ENCODE measurements at regions of chr2 and their contacts with region 1.

Region 1: DNA sequence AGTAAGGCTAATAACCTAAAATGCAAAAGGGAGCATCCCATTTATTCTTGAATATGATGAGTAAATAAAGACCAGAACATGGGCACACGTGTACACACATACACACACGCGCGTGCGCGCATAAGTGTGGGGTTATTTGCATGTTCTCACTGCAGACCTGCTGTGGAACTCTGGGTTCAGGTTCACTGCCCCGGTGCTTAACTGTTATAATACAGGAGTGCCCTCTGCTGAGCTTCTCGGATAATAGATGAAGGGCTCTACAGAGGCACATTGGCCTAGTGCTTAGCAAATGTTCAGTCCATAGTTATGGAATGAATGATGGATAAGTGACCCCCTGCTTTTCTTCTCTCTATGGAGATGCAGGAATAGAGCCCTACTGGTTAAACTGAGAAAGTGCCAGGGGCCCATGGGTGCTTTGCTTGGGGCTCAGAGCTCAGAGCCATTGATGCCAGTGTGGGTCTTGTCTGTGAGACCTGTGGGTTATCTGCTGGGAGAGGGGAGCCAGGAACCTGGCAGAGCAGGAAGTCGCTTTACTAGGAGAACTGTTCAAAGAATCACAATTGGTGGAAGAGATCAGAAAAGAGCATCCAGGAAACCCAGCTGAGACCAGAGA is 3.6 kb upstream of the ARL4C start:
- DNase-seq: peak; percentile 47
- H3K4me3 ChIP-seq: no peak overlapping the region
- H3K27ac ChIP-seq: no peak overlapping the region
- H3K4me1 ChIP-seq: peaks cover 31% of the 10 kb centered on the region
- H3K27me3 ChIP-seq: no peaks in the 10 kb centered on the region
- CTCF ChIP-seq: peak; percentile 54 to 73

Region 2: DNA sequence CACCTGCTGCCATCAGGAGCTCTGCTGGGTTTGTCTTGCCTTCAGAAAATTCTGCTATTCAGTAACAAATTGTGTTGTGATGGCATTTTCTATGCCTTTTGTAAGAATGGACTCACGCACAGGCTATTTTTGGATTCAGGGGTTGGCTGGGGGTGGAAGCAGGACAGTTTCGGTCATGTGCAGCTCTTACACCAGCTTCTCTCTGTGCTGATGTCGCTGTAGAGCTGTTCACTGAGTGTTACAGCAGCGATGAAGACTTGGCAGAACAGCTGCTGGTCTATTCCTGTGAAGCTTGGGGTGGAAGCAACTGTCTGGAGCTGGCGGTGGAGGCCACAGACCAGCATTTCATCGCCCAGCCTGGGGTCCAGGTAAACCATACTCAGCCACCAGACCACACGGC is 534.1 kb before region 1 on chr2:
- CTCF ChIA-PET with region 1: no interaction called
- dilution Hi-C with region 1: loop called (anchors 10 kb)
- in situ Hi-C with region 1: no loop called
- intact Hi-C with region 1: no loop called
- DNase-seq: no peak
- H3K4me3 ChIP-seq: no peak overlapping the region
- H3K27ac ChIP-seq: no peak overlapping the region
- H3K4me1 ChIP-seq: no peaks in the 10 kb centered on the region
- H3K27me3 ChIP-seq: no peaks in the 10 kb centered on the region
- CTCF ChIP-seq: no peak

Region 3: DNA sequence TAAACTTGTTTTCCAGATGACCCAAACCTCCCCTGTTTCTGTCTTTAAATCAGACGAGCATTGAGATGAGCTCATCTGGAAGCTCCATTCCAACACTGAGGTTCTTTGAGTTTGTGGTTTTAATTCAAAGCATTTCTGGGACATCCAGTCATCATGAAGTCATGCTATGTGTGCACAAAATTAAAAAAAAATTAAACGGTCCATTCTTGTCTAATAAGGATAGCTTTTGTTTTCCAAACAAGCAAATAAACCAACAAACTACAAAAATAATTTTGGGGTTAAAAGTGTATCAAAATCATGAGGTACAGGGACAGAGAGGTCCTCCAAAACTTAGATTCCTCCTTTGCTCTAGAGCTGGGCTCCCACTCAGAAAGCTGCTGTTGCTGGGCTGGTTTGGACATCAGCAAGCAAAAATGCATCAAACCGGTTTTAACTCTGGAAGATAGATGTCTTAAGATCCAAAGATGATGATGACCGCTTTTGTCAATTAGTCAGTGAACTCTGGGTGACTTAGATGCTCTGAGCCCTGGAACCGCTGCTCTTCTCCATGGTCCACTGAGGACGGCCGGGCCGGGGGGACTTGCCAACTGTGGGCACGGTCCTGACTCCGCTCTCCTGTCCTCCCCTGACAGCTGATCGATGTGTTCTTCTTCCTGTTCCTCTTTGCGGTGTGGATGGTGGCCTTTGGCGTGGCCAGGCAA is 517.9 kb before region 1 on chr2:
- CTCF ChIA-PET with region 1: no interaction called
- dilution Hi-C with region 1: no loop called
- in situ Hi-C with region 1: loop called in 1 of 2 experiments (anchors 10 kb)
- intact Hi-C with region 1: no loop called
- DNase-seq: peak; percentile 95
- H3K4me3 ChIP-seq: no peak overlapping the region
- H3K27ac ChIP-seq: peak overlapping the region; percentile 92
- H3K4me1 ChIP-seq: peaks cover 46% of the 10 kb centered on the region
- H3K27me3 ChIP-seq: no peaks in the 10 kb centered on the region
- CTCF ChIP-seq: no peak

Region 4: GRCh38 chr2:234241656-234242458 is 258.6 kb before region 1 on chr2:
- CTCF ChIA-PET with region 1: no interaction called
- dilution Hi-C with region 1: loop called (anchors 5 kb)
- in situ Hi-C with region 1: no loop called
- intact Hi-C with region 1: no loop called
- DNase-seq: peak; percentile 93
- H3K4me3 ChIP-seq: peak overlapping the region in 2 of 3 experiments; percentile 1 to 27
- H3K27ac ChIP-seq: peak overlapping the region; percentile 95
- H3K4me1 ChIP-seq: peaks cover 52% of the 10 kb centered on the region
- H3K27me3 ChIP-seq: no peaks in the 10 kb centered on the region
- CTCF ChIP-seq: no peak

Region 5: DNA sequence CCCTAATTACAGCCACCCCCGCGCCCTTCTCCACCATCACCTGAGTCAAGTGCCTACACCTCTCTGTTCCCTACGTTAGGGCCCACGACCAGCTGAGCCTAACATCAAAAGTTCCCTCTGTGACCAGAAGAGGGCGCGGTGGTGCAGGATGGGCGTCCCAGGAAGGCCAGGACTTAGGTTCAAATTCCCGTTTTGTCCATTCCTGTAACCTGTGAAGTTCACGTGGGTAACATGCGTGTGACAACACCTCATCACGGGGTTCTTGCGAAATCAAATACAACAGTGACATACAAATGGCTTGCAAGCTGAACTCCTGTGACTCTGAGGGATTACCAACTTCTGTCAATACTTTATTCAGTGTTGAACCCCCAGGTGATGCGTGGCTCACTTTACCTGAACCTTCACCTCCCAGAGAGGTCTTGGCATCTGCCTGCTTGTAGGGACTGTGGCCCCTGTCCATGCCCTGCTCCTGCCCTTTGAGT is 211.5 kb before region 1 on chr2:
- CTCF ChIA-PET with region 1: interaction called, 5 read pairs
- dilution Hi-C with region 1: no loop called
- in situ Hi-C with region 1: no loop called
- intact Hi-C with region 1: loop called (anchors 1 kb)
- DNase-seq: peak; percentile 24
- H3K4me3 ChIP-seq: no peak overlapping the region
- H3K27ac ChIP-seq: no peak overlapping the region
- H3K4me1 ChIP-seq: peaks cover 32% of the 10 kb centered on the region
- H3K27me3 ChIP-seq: no peaks in the 10 kb centered on the region
- CTCF ChIP-seq: peak; percentile 61 to 78

Region 6: DNA sequence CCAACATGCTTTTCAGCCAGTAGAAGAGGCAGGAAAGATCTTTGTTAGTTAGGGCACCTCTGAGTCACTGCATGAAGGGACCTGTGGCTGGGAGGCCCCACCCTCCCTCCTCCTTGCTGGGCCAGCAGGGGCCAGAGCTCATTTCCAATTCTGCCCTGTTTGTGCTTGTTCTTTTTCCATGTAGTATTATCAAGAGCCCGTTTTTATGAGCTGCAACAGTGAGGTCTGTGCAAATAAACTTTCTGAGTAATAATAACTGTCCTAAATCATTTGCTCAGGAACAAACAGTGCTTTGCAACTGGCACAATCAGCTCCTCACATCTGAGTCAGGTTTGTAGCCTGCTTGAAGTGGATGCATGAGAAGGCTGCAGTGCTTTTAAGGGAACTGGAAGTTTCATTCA is 131.6 kb before region 1 on chr2:
- CTCF ChIA-PET with region 1: interaction called, 4 read pairs
- dilution Hi-C with region 1: no loop called
- in situ Hi-C with region 1: no loop called
- intact Hi-C with region 1: loop called (anchors 10 kb)
- DNase-seq: peak; percentile 82
- H3K4me3 ChIP-seq: no peak overlapping the region
- H3K27ac ChIP-seq: peak overlapping the region; percentile 15
- H3K4me1 ChIP-seq: peaks cover 41% of the 10 kb centered on the region
- H3K27me3 ChIP-seq: no peaks in the 10 kb centered on the region
- CTCF ChIP-seq: peak; percentile 2 to 24

Region 7: DNA sequence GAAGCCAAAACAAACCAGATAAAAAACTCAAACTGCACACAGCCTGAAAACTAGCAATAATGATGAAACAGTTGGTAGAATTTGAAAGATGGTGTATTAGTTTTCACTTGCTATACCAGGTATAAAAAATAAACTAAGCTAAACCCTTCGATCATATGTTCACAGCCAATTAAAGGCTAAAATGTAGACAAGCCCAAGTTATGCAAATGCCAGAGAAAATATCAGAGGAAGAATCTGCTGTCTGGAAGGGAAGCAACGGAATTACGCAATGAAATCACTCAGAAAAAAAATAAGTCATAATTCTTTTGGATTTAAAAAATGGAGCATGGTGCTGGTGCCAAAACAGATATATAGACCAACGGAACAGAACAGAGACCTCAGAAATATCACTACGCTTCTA is 111.9 kb before region 1 on chr2:
- CTCF ChIA-PET with region 1: no interaction called
- dilution Hi-C with region 1: no loop called
- in situ Hi-C with region 1: no loop called
- intact Hi-C with region 1: no loop called
- DNase-seq: no peak
- H3K4me3 ChIP-seq: no peak overlapping the region
- H3K27ac ChIP-seq: no peak overlapping the region
- H3K4me1 ChIP-seq: no peaks in the 10 kb centered on the region
- H3K27me3 ChIP-seq: no peaks in the 10 kb centered on the region
- CTCF ChIP-seq: no peak

Region 8: GRCh38 chr2:235116885-235117492 is 616.5 kb after region 1 on chr2:
- CTCF ChIA-PET with region 1: interaction called, 4 read pairs
- dilution Hi-C with region 1: no loop called
- in situ Hi-C with region 1: no loop called
- intact Hi-C with region 1: loop called (anchors 5 kb)
- DNase-seq: peak; percentile 24
- H3K4me3 ChIP-seq: no peak overlapping the region
- H3K27ac ChIP-seq: no peak overlapping the region
- H3K4me1 ChIP-seq: no peaks in the 10 kb centered on the region
- H3K27me3 ChIP-seq: no peaks in the 10 kb centered on the region
- CTCF ChIP-seq: peak; percentile 58 to 66

Measured in mammary epithelial cell (primary cell).